ENCODE measurements at regions of chr11 and their contacts with region 1.

Region 1: GRCh38 chr11:7986768-7987559 is at the start of gene EIF3F:
- DNase-seq: peak; percentile 76 to 94 (median 86)
- ATAC-seq: peak; percentile 99
- H3K4me3 ChIP-seq: peak within 1 kb of the TSS; percentile 79 to 81 (median 81)
- H3K27ac ChIP-seq: peak within 1 kb of the TSS; percentile 48 to 55 (median 53)
- H3K4me1 ChIP-seq: peaks cover 0 to 22% (median 8%) of the 10 kb centered on the region in 4 donors
- H3K27me3 ChIP-seq: no peaks in the 10 kb centered on the region
- CTCF ChIP-seq: peak; percentile 76 to 92 (median 88)
- POLR2A ChIP-seq: peak; percentile 56
- total RNA-seq, gene EIF3F: 69.9 to 97.0 (median 84.0) TPM

Region 2: DNA sequence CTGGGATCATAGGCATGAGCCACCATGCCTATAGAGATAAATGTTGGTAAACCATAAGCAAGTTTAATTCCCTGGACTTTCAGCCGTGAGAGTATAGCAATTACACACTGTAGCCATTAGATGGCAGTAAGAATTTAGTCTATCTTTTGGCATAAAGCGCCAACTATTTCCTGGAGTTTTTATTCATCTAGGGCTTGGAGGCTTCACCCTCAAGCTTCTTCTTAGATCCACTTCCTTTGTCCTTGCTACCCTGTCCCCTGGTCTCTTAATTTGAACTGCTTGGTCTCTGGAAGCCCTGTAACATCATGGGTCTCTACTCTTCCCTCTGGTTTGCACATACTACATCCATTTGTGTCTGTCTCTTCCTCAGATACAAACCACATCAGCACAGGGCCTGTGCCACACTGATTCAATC is 94.1 kb before region 1 on chr11:
- intact Hi-C with region 1: loop called (anchors 5 kb)
- DNase-seq: no peak
- ATAC-seq: peak; percentile 70 to 79 (median 74)
- H3K4me3 ChIP-seq: no peak overlapping the region
- H3K27ac ChIP-seq: peak overlapping the region; percentile 13 to 93 (median 76)
- H3K4me1 ChIP-seq: peaks cover 0 to 43% (median 21%) of the 10 kb centered on the region in 4 donors
- H3K27me3 ChIP-seq: no peaks in the 10 kb centered on the region
- CTCF ChIP-seq: peak; percentile 68 to 82 (median 74)
- POLR2A ChIP-seq: no peak

Region 3: DNA sequence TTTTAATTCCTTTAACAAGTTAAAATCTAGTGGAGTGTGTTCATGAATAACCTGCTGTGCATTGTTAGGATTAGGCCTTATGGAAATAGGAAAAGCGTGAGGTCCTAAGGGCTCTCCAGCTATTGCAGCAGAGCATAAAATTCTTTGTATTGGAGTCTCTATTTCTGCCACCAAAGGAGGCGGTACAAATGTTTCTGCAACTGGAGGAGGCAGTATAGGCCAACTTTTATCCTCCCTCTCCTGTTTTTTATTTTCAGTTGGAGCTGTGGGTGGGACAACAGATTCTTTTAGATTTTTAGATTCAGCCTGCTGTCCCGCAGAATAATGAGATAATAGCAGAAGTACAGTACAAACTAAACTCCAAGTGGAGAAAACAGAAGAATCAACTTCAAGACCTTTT is 82.0 kb before region 1 on chr11:
- intact Hi-C with region 1: loop called in 1 of 2 experiments (anchors 5 kb)
- DNase-seq: no peak
- ATAC-seq: no peak
- H3K4me3 ChIP-seq: no peak overlapping the region
- H3K27ac ChIP-seq: no peak overlapping the region
- H3K4me1 ChIP-seq: peaks cover 0 to 4% (median 0%) of the 10 kb centered on the region in 4 donors
- H3K27me3 ChIP-seq: no peaks in the 10 kb centered on the region
- CTCF ChIP-seq: peak in 1 of 4 donors; percentile 4
- POLR2A ChIP-seq: no peak

Measured in right lobe of liver (tissue), 6 donors.